ENCODE measurements at regions of chr19 and their contacts with region 1.

Region 1: DNA sequence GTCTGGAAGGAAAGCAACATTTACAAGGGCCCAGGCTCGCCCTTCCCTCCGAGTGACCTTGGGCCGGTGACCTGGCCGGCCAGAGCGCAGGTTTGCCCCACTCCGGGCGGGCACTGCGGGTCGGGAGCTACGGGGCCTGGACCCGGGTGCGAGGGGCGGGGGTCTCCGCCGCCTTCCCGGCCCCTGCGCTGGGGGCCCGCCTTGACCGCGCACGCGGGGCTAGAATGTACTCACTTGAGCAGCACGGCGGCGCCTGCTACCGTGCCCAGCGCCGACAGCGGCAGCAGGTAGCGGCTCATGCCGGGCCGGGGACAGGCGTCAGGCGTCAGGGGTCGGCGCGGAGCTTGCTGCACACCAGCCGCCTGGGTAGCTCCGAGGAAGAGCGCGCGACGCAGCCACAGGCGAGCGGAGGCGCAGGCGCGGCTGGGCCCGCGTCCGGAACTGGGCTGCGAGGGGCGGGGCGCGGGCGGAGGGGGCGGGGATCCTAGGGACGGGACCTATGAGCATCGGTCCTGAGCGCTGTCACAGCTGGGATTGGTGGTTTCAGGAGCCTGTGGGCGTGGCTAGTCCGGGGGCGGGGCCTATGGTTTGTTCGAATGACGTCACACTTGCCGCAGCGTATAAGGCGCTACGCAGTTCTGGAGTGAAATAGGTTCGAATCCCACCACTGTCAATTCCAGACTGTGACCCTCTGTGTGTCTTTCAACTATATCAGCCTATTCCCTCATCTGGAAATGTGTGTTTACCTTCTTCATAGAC is at the start of gene RDH13:
- DNase-seq: peak; percentile 96
- H3K4me3 ChIP-seq: peak within 1 kb of the TSS; percentile 53 to 84 (median 55)
- H3K27ac ChIP-seq: peak within 1 kb of the TSS; percentile 38
- H3K4me1 ChIP-seq: peaks cover 8% of the 10 kb centered on the region
- H3K27me3 ChIP-seq: peaks cover 12 to 13% of the 10 kb centered on the region in 2 experiments
- CTCF ChIP-seq: no peak
- POLR2A ChIP-seq: no peak
- total RNA-seq, gene RDH13: 14.0 and 19.6 TPM in 2 replicates

Region 2: DNA sequence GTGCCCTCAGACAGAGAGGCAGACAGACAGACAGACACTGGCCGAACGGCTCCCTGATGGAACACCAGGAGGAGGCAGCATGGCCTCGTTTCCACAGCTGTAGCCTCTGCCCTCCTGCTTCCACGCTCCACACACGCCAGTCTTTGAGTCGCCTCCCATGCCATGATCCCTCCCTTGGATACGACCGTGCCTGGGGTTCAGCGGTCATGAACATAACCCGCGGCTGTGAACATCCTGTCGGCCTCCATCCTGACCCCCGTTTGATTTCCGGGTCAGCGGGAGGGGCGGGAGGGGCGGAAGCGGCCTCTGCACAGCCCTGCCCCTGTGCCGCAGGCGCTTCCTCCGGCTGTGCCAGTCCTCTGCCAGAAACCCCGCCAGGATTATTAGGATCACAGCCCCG is 48.2 kb before region 1 on chr19:
- CTCF ChIA-PET with region 1: no interaction called
- POLR2A ChIA-PET with region 1: no interaction called
- dilution Hi-C with region 1: no loop called
- intact Hi-C with region 1: loop called (anchors 1 kb)
- DNase-seq: peak; percentile 31
- H3K4me3 ChIP-seq: no peak overlapping the region
- H3K27ac ChIP-seq: no peak overlapping the region
- H3K4me1 ChIP-seq: peaks cover 10% of the 10 kb centered on the region
- H3K27me3 ChIP-seq: no peaks in the 10 kb centered on the region
- CTCF ChIP-seq: peak in 1 of 2 donors; percentile 28
- POLR2A ChIP-seq: peak; percentile 21

Region 3: GRCh38 chr19:55080968-55081772 is 18.3 kb after region 1 on chr19:
- CTCF ChIA-PET with region 1: interaction called, 9 read pairs
- POLR2A ChIA-PET with region 1: interaction called, 4 read pairs
- dilution Hi-C with region 1: no loop called
- intact Hi-C with region 1: loop called (anchors 2 kb)
- DNase-seq: peak; percentile 89
- H3K4me3 ChIP-seq: peak overlapping the region; percentile 55 to 67 (median 58)
- H3K27ac ChIP-seq: no peak overlapping the region
- H3K4me1 ChIP-seq: peaks cover 20% of the 10 kb centered on the region
- H3K27me3 ChIP-seq: peaks cover 0 to 3% of the 10 kb centered on the region in 2 experiments
- CTCF ChIP-seq: no peak
- POLR2A ChIP-seq: no peak

Region 4: DNA sequence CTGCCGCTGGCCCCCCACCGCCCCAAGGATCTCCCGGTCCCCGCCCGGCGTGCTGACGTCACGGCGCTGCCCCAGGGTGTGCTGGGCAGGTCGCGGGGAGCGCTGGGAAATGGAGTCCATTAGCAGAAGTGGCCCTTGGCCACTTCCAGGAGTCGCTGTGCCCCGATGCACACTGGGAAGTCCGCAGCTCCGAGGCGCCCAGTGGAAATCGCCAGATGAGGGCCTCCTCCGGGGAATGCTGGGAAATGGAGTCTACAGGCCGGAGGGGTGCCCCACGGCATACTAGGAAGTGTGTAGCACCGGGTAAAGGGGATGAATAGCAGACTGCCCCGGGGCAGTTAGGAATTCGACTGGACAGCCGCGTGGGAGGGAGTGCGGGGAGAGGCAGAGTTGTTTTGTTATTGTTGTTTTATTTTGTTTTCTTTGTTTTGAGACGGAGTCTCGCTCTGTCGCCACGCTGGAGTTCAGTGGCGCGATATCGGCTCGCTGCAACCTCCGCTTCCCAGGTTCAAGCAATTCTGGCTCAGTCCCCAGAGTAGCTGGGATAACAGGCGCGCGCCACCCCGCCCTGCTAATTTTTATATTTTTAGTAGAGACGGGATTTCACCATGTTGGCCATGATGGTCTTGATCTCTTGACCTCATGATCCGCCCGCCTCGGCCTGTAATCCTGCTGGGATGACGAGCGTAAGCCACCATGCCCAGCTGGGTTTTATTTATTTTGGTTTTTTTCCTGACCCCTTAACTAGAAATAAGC is 54.9 kb after region 1 on chr19 and contains the start of gene PPP1R12C:
- CTCF ChIA-PET with region 1: no interaction called
- POLR2A ChIA-PET with region 1: no interaction called
- dilution Hi-C with region 1: no loop called
- intact Hi-C with region 1: loop called (anchors 2 kb)
- DNase-seq: peak; percentile 98
- H3K4me3 ChIP-seq: peak within 1 kb of the TSS; percentile 30 to 92 (median 75)
- H3K27ac ChIP-seq: peak within 1 kb of the TSS; percentile 59
- H3K4me1 ChIP-seq: peaks cover 20% of the 10 kb centered on the region
- H3K27me3 ChIP-seq: no peaks in the 10 kb centered on the region
- CTCF ChIP-seq: no peak
- POLR2A ChIP-seq: peak; percentile 79
- total RNA-seq, gene PPP1R12C: 137 and 149 TPM in 2 replicates